Naive thymus-derived CD4-positive, alpha-beta T cell (primary cell): ENCODE measurements at regions of chr6 and their contacts with region 1.

Region 1: GRCh38 chr6:43477235-43478007 is at the start of gene TJAP1:
- DNase-seq: peak; percentile 89 to 99 (median 95)
- ATAC-seq: peak; percentile 100
- H3K4me3 ChIP-seq: peak within 1 kb of the TSS; percentile 83
- H3K4me3 Mint-ChIP-seq: peak within 1 kb of the TSS; percentile 87 to 99 (median 93)
- H3K27ac ChIP-seq: peak within 1 kb of the TSS; percentile 96
- H3K27ac Mint-ChIP-seq: peak within 1 kb of the TSS; percentile 90 to 98 (median 96)
- H3K4me1 ChIP-seq: peaks cover 10 to 16% of the 10 kb centered on the region in 2 donors
- H3K4me1 Mint-ChIP-seq: peaks cover 37 to 54% (median 51%) of the 10 kb centered on the region in 7 donors
- H3K27me3 ChIP-seq: no peaks in the 10 kb centered on the region
- H3K27me3 Mint-ChIP-seq: no peaks in the 10 kb centered on the region
- total RNA-seq, gene TJAP1: 29.2 to 55.2 (median 33.5) TPM

Region 2: GRCh38 chr6:43386492-43386891 is 90.9 kb before region 1 on chr6:
- CTCF ChIA-PET with region 1: no interaction called
- POLR2A ChIA-PET with region 1: interaction called, 5 read pairs
- intact Hi-C with region 1: loop called in 1 of 2 experiments (anchors 1 kb)
- DNase-seq: peak in 3 of 9 donors; percentile 43 to 64 (median 44)
- ATAC-seq: no peak
- H3K4me3 ChIP-seq: no peak overlapping the region
- H3K4me3 Mint-ChIP-seq: peak overlapping the region in 4 of 10 donors; percentile 23 to 63 (median 40)
- H3K27ac ChIP-seq: no peak overlapping the region
- H3K27ac Mint-ChIP-seq: peak overlapping the region in 8 of 9 donors; percentile 6 to 95 (median 73)
- H3K4me1 ChIP-seq: peaks cover 46 to 59% of the 10 kb centered on the region in 2 donors
- H3K4me1 Mint-ChIP-seq: peaks cover 54 to 78% (median 72%) of the 10 kb centered on the region in 7 donors
- H3K27me3 ChIP-seq: no peaks in the 10 kb centered on the region
- H3K27me3 Mint-ChIP-seq: peaks cover 0 to 67% (median 4%) of the 10 kb centered on the region in 5 donors

Region 3: DNA sequence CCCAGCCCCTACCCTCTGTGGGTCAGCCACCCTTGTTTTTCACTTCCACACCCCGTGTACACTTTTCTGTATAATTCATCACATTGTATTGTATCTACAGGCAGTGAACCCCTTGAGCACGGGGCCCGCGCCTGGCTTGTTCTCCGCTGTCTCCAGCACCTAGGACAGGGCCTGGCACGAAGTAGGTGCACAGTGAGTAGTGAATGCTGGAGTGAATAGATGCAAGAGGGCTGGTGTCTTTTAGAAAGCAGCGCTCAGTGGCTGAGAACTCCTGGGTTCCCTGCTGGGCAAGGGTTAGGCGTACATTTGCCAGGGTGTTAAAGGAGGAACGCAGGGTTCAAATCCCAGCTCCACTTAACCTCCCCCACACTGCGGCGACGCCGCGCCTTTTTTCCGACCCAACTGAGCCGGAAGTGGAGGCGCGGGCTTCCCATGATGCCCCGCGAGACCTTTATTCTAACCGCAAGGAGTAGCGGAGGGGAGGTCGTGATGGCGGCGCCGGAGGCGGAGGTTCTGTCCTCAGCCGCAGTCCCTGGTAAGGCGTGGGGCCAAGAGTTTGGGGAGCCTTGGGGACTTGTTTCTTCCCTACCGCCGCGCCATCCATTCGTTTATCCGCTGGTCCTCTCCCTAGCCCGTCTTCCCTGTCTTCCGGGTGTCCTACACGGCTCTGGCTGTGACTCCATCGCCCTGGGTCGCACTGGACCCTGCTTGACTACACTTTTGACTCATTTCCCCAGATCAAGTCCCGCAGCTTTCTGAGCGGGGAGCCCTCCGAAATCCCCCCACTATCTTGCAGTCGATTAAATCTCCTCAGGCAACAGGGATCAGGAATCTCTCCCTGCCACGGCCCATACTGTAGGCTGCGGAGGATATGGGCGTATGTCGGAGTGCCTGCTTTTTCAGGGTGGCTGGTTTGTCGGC is 158.2 kb after region 1 on chr6 and contains the start of gene MAD2L1BP:
- CTCF ChIA-PET with region 1: no interaction called
- POLR2A ChIA-PET with region 1: no interaction called
- intact Hi-C with region 1: loop called in 1 of 2 experiments (anchors 5 kb)
- DNase-seq: peak; percentile 65 to 92 (median 88)
- ATAC-seq: peak; percentile 94
- H3K4me3 ChIP-seq: peak within 1 kb of the TSS; percentile 91
- H3K4me3 Mint-ChIP-seq: peak within 1 kb of the TSS; percentile 92 to 100 (median 99)
- H3K27ac ChIP-seq: peak within 1 kb of the TSS; percentile 87
- H3K27ac Mint-ChIP-seq: peak within 1 kb of the TSS; percentile 93 to 98 (median 96)
- H3K4me1 ChIP-seq: peaks cover 28 to 30% of the 10 kb centered on the region in 2 donors
- H3K4me1 Mint-ChIP-seq: peaks cover 34 to 65% (median 48%) of the 10 kb centered on the region in 7 donors
- H3K27me3 ChIP-seq: no peaks in the 10 kb centered on the region
- H3K27me3 Mint-ChIP-seq: peaks cover 0 to 3% (median 0%) of the 10 kb centered on the region in 5 donors
- total RNA-seq, gene MAD2L1BP: 25.2 to 44.5 (median 28.0) TPM

Region 4: DNA sequence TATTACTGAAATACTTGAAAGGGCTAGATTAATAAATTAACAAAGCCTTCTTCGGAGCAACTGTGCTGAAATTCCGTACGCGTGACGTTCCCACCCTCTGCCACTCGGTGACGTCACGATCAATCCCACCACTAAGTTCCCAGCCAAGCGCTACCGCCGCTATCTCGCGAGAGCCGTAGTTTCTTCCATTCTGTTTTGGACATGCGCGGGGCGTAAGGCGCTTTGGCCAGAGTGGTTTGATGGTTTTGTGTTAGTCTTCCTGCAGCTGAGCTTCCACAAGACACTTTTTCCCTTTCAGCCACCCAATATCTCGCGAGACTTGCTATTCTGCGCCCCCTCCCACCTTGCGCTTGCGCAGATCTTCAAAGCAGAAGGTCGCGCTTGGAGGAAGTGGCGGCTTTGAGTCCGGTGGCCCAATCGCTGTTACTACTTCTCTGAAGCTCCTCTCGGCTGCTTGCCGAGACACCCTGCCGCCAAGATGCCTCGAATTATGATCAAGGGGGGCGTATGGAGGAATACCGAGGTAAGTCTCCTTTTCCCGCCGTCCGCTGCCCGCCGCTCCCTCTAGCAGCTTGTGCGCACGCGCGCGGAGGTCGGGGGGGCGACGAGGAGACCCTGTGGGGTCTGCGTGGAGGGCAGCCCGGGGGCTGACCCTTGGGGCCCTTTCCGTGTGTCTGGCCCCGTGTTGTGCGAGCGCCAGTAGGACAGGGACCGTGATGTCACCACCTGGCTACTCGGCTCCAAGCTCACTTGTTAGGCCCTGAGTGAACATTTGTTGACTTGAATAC is 910.1 kb after region 1 on chr6 and contains the start of gene CDC5L:
- CTCF ChIA-PET with region 1: no interaction called
- POLR2A ChIA-PET with region 1: no interaction called
- intact Hi-C with region 1: loop called in 1 of 2 experiments (anchors 5 kb)
- DNase-seq: peak; percentile 80 to 96 (median 93)
- ATAC-seq: peak; percentile 88
- H3K4me3 ChIP-seq: peak within 1 kb of the TSS; percentile 71
- H3K4me3 Mint-ChIP-seq: peak within 1 kb of the TSS; percentile 91 to 100 (median 96)
- H3K27ac ChIP-seq: peak within 1 kb of the TSS; percentile 85
- H3K27ac Mint-ChIP-seq: peak within 1 kb of the TSS; percentile 91 to 99 (median 96)
- H3K4me1 ChIP-seq: peaks cover 17 to 29% of the 10 kb centered on the region in 2 donors
- H3K4me1 Mint-ChIP-seq: peaks cover 24 to 49% (median 46%) of the 10 kb centered on the region in 7 donors
- H3K27me3 ChIP-seq: no peaks in the 10 kb centered on the region
- H3K27me3 Mint-ChIP-seq: peaks cover 0 to 28% (median 0%) of the 10 kb centered on the region in 5 donors
- total RNA-seq, gene CDC5L: 17.4 to 25.4 (median 22.4) TPM